H1 (cell line): ENCODE measurements at regions of chr10 and their contacts with region 1.

Region 1: DNA sequence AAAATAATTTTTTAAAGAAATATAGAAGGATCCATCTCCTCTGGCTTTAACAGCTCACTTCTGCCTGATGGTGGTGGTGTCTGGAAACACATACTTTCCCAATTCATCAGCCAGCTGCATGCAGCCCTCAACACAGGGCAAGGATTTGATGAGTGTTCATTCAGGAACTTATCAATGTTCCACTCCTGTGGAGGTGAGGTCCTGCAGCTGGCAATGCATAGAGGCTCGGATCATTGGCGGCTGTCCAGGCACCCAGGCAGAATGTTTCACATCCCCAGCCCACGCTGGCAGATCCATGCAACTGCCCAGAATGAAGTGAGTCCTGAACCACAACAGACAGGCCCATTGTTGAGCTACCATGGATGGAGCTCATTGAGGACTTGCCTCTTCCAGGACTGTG is 55.2 kb upstream of the KCNMA1 start:
- DNase-seq: no peak
- H3K4me3 ChIP-seq: no peak overlapping the region
- H3K27ac ChIP-seq: no peak overlapping the region
- H3K4me1 ChIP-seq: no peaks in the 10 kb centered on the region
- H3K27me3 ChIP-seq: no peaks in the 10 kb centered on the region
- CTCF ChIP-seq: no peak
- EP300 ChIP-seq: no peak
- POLR2A ChIP-seq: no peak
- RAD21 ChIP-seq: no peak; a peak in 1 of 4 replicates

Region 2: DNA sequence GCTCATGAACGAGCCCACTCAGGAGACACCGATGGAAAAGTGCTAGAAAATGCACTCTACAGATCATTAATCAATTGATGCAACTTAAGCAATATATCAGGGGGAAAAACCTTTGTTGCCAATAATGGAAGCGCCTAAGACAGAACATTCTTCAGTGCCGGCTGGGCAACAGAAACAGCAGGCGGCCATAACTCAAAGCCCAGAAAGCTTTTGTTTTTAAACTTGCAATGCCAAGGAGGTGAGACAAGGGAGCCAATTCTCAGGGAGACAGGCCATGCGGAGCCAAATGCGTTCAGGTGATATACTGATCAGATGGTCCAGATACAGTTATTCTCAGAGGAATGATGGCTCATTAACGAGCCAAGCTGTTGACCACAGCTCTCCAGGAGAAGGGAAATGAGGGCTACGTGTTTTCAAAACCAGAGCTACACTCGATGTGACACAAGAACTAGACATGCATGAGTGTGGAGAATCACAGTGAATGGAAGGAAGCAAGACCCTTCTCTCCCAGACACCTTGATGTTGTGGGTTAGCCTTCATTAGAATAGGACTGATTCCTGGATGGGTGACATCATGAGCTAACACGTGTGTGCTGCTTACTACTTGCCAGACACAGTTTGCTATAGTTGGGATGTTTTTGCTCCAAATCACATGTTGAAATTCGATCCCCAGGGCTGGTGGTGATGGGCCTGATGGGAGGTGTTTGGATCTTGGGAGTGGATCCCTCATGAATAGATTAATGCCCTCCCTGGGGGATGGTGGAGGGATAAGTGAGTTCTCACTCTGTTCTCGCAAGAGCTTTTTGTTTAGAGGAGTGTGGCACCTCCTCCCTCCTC is 23.9 kb after region 1 on chr10:
- CTCF ChIA-PET with region 1: interaction called, 112 read pairs
- POLR2A ChIA-PET with region 1: no interaction called
- DNase-seq: no peak
- H3K4me3 ChIP-seq: no peak overlapping the region
- H3K27ac ChIP-seq: no peak overlapping the region
- H3K4me1 ChIP-seq: peaks cover 0 to 10% (median 5%) of the 10 kb centered on the region in 4 experiments; a peak in 5 of 7 replicates
- H3K27me3 ChIP-seq: peaks cover 0 to 2% (median 0%) of the 10 kb centered on the region in 4 experiments; a peak in 4 of 7 replicates
- CTCF ChIP-seq: no peak
- EP300 ChIP-seq: no peak
- POLR2A ChIP-seq: no peak
- RAD21 ChIP-seq: no peak